OCI-LY7 (cell line): ENCODE measurements at regions of chr11 and their contacts with region 1.

Region 1: DNA sequence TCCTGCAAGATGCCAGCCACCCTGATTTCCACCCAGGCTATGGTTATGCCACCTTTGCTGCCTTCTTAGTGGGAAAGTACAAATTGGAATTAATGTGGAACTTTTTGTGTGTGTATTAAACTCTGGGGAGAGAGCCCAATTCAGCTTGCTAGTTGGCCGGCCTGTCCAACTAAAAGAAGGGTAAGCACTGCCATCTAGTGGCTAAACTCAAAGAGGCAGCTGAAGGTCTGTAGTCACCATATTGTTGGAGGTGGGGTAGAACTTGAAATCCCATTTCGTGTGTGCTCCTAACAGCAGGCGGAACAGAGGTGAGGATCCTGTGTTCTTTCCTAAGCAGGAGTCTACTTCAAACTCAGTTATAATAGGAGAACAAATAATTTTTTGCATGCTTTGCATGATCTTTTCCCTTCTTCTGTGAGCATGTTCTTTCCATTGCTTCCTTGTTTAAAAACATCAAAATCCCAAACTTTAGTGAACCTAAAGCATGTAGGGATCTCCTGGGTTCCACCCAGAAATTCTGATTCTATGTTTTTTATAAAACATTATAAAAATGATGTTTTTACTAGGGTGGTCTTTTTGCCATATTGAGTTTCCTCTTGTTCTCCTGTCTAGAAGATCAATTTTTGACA is 138.8 kb upstream of the SORL1-AS1 start:
- DNase-seq: peak; percentile 87
- H3K4me3 ChIP-seq: peak overlapping the region; percentile 66
- H3K27ac ChIP-seq: peak overlapping the region; percentile 98
- H3K4me1 ChIP-seq: peaks cover 69% of the 10 kb centered on the region
- CTCF ChIP-seq: peak; percentile 97

Region 2: DNA sequence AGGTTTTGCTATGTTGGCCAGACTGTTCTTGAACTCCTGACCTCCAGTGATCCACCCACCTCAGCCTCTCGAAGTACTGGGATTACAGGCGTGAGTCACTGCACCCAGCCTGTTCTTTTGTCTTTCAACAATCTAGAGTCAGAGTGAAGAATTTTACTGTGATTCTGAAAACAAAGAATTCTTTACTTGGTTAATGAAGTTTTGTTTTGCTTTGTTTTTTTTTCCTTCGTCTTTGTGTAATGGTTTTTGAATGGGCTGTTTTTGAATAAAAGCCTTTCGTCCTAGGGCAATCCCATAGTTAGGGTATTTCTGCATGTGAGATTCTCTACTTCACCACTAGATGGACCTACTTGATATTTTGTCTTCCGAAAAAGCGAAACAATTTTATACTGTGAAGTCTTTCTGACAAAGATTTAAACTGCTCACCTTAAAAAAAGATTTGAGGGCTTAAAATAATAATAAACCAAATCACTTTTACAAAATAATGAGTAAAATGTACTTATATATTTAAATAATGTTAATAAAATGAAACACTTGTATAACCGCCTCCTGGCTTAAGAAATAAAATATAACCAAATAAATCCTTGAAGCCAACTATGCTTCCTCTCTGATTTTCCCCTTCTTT is 342.4 kb before region 1 on chr11:
- CTCF ChIA-PET with region 1: no interaction called
- POLR2A ChIA-PET with region 1: interaction called, 3 read pairs
- intact Hi-C with region 1: loop called (anchors 1 kb)
- DNase-seq: peak; percentile 69
- H3K4me3 ChIP-seq: no peak overlapping the region
- H3K27ac ChIP-seq: no peak overlapping the region
- H3K4me1 ChIP-seq: no peaks in the 10 kb centered on the region
- CTCF ChIP-seq: peak; percentile 98

Region 3: DNA sequence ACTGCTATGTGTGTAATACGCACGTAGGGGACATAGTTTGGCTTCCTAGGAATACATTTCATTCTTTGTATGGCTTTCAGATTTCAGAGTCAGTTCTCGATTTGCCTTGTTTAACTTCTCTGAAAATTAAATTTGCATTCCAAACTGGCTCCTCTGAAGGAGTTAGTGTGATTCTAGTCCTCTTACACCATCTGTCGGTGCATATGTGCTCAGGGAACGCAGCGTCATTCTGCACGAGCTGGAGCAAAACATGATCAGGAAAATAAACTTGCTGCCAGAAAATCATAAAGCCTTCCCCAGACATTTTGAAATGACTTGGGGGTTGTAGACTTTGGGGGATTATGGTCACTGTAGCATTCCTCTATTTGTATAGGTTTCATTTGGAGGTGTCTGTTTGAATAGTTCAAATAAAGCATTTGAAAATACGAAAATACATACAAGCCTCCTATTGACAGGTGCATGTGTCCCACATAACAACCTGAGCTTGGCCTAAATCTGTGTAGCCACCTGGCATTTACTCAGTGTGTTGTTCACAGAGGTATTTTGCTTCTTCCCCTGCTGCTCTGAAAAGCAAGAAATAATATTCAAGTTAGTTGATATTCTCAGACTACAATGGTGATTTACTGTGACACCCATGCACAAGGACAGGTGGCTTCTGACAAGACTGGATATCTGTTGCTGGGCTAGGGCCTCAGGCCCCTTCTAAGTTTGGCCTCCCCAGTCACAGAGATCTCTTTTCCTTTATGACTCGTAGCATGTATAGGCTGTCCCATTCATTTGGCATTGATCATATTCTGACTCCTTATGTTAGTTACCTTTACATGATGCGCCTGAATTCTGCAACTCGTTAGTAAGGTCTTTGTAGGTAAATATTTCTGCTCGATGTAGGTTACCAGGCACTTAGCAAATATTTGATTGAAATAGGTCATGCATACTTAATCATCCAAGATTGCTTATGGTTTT is 57.1 kb before region 1 on chr11:
- CTCF ChIA-PET with region 1: no interaction called
- POLR2A ChIA-PET with region 1: no interaction called
- intact Hi-C with region 1: loop called (anchors 1 kb)
- DNase-seq: peak; percentile 68
- H3K4me3 ChIP-seq: peak overlapping the region; percentile 35
- H3K27ac ChIP-seq: peak overlapping the region; percentile 84
- H3K4me1 ChIP-seq: peaks cover 81% of the 10 kb centered on the region
- CTCF ChIP-seq: peak; percentile 69

Region 4: DNA sequence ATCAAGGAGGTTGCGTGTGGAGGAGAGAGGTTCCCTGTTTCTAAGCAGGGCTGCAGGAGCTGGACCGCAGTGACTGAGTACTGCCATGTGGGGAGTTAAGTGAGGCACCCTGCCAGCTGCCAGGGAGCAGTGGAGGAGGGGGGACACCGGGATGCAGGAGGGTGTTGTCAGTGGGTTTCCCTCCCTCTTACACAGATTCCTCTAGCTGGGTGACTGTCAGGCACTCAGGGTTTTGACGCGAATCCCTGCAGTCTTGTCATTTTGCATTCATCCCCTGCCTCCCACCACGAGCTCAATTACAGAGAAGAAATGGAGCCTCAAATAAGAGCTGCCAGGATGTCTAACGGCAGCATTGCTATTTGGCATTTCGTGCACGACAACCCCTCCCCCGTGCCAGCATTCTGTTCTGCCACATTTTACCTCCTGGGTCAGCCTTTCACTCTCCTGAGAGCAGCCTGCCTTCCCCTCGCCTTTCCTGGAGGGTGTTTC is 18.9 kb before region 1 on chr11:
- CTCF ChIA-PET with region 1: no interaction called
- POLR2A ChIA-PET with region 1: interaction called, 7 read pairs
- intact Hi-C with region 1: loop called (anchors 1 kb)
- DNase-seq: no peak
- H3K4me3 ChIP-seq: no peak overlapping the region
- H3K27ac ChIP-seq: peak overlapping the region; percentile 97
- H3K4me1 ChIP-seq: peaks cover 59% of the 10 kb centered on the region
- CTCF ChIP-seq: no peak